Activated naive CD4-positive, alpha-beta T cell treated with anti-CD3 and anti-CD28 coated beads for 36 hours (primary cell): ENCODE measurements at regions of chr12 and their contacts with region 1.

Region 1: GRCh38 chr12:117025481-117026151 is 73.6 kb downstream of the TESC start:
- DNase-seq: peak; percentile 54
- H3K4me3 Mint-ChIP-seq: no peak overlapping the region
- H3K27ac Mint-ChIP-seq: no peak overlapping the region
- H3K4me1 Mint-ChIP-seq: no peaks in the 10 kb centered on the region
- H3K27me3 Mint-ChIP-seq: no peaks in the 10 kb centered on the region

Region 2: DNA sequence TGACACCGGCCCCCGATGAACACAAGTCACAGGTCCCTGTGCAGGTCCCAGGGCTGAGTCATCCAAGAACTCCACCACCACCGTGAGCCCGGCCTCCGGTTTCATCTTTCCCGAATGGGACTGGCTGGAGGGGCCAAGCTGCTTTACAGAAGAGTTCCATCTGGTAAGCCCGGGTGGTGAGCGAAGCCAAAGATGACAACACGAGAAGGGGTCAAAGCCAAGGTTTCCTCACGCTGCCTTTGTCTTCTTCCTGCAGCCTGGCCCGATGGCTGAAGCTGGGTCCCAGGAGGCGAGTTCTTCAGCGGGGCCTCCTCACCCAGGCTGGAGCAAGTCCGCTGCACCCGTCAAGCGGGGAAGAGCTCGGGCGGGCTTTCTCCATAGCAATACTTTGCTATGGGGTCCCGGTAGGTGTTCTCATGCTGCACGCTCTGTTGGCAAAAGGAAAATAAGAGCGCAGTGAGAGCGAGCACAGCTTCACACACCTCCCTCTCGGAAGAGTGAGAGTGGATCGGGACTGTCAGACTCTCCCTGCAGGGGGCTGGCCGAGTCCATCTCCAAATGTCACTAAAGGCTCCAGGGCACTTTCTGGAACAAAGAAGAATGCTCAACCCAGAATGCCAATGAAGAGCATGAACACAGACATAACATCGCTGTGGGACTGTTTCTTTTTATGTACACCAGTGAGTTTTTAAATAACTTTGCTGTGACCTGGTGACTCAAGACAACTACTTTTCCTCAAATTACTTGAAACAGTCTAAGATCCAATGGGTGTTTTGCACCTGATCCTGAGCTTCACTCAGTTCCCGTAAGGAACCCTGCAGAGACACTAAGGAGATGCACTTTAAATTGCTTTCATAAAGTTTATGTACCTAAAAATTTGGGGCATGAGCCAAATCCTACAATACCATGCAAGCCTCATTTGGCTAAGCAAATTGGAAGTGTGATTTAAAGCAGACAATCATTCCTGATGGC is 307.9 kb before region 1 on chr12:
- CTCF ChIA-PET with region 1: no interaction called
- intact Hi-C with region 1: no loop called
- DNase-seq: no peak
- H3K4me3 Mint-ChIP-seq: no peak overlapping the region
- H3K27ac Mint-ChIP-seq: no peak overlapping the region
- H3K4me1 Mint-ChIP-seq: peaks cover 10% of the 10 kb centered on the region
- H3K27me3 Mint-ChIP-seq: no peaks in the 10 kb centered on the region

Region 3: GRCh38 chr12:117119592-117120198 is 94.1 kb after region 1 on chr12:
- CTCF ChIA-PET with region 1: interaction called, 56 read pairs
- intact Hi-C with region 1: loop called (anchors 1 kb)
- DNase-seq: peak; percentile 40
- H3K4me3 Mint-ChIP-seq: no peak overlapping the region
- H3K27ac Mint-ChIP-seq: no peak overlapping the region
- H3K4me1 Mint-ChIP-seq: peaks cover 5% of the 10 kb centered on the region
- H3K27me3 Mint-ChIP-seq: no peaks in the 10 kb centered on the region

Region 4: DNA sequence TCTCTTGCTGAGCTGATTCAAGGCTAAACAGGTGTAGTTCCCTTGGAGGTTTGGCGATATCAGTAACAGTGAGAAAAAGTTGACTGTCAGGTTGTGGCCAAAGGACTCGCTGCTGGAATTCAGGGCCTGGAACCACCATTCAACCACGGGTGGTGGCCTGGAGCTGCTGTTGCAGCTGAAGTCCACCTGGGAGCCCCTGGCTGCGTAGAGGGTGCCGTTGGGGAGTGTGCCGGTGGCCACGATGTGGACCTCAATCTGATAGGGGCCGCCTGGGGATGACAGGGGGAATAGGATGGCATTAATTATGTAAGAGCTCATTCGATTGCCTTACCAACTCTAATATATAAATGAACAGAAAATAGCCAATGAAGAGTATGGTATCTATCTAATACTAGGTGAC is 1056.5 kb after region 1 on chr12:
- CTCF ChIA-PET with region 1: no interaction called
- intact Hi-C with region 1: no loop called
- DNase-seq: no peak
- H3K4me3 Mint-ChIP-seq: no peak overlapping the region
- H3K27ac Mint-ChIP-seq: no peak overlapping the region
- H3K4me1 Mint-ChIP-seq: no peaks in the 10 kb centered on the region
- H3K27me3 Mint-ChIP-seq: no peaks in the 10 kb centered on the region